PC-3 (cell line): ENCODE measurements at regions of chr4 and their contacts with region 1.

Region 1: DNA sequence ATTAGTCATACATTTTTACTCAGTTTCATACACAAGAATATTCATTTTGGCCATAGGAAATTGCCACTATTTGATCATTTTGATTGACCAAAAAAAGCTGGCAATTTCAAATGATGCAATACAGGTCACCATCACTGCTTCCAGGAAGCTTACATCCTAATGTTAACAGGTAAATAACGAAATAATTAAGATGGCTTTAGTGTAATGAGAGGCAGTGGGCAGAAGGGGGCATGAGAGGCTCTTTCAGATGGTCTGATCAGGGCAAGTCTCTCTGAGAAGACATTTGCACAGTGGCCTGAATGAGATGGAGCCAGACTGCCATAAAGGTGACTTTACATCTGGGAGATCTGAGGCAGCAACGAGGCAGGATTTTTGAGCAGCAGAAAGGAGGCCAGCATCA is 170.7 kb downstream of the SLIT2 start:
- DNase-seq: peak; percentile 51
- ATAC-seq: peak; percentile 61
- H3K4me3 ChIP-seq: no peak overlapping the region
- H3K27ac ChIP-seq: no peak overlapping the region
- H3K4me1 ChIP-seq: peaks cover 8% of the 10 kb centered on the region; the same call in 1 of the 2 replicates
- H3K27me3 ChIP-seq: no peaks in the 10 kb centered on the region
- CTCF ChIP-seq: peak; percentile 50

Region 2: GRCh38 chr4:20299515-20299914 is 122.9 kb before region 1 on chr4:
- CTCF ChIA-PET with region 1: no interaction called
- POLR2A ChIA-PET with region 1: no interaction called
- intact Hi-C with region 1: loop called (anchors 10 kb)
- DNase-seq: peak; percentile 45
- ATAC-seq: no peak
- H3K4me3 ChIP-seq: no peak overlapping the region
- H3K27ac ChIP-seq: no peak overlapping the region
- H3K4me1 ChIP-seq: peaks cover under 1% of the 10 kb centered on the region; the same call in 1 of the 2 replicates
- H3K27me3 ChIP-seq: no peaks in the 10 kb centered on the region
- CTCF ChIP-seq: peak; percentile 56

Region 3: DNA sequence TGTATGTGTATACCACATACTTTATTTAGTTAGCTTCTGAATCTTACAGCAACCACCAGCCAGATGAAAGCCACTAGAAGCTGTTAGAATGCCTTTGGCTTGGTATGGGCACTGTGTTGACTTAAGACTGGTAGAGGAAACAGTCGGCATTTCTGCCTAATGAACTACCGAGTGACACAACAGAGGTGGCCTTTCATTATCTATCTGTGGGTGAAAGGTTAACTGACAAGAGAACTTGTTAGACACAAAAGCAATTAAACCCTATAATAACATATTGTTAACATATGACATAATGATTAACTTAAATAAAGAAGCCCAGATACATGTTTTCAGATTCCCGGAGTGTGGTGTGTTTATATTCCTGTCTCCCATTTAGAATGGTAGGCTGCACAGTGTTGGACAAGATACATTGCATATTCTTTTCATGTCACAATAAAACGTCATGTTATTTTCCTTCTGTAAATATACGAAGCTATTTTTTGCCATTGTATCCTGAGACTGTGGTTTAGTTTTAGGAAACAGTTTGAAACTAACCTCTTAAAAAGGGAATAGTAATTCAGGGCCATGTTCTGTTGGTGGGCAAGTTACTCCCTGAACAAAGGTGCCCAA is 10.8 kb after region 1 on chr4:
- CTCF ChIA-PET with region 1: interaction called, 10 read pairs
- POLR2A ChIA-PET with region 1: no interaction called
- intact Hi-C with region 1: no loop called
- DNase-seq: no peak
- ATAC-seq: no peak
- H3K4me3 ChIP-seq: no peak overlapping the region
- H3K27ac ChIP-seq: no peak overlapping the region
- H3K4me1 ChIP-seq: 0 out of 2 replicates have a peak, but pooled peaks cover 12% of the 10 kb centered on the region
- H3K27me3 ChIP-seq: no peaks in the 10 kb centered on the region
- CTCF ChIP-seq: no peak

Region 4: GRCh38 chr4:20506827-20507226 is 84.4 kb after region 1 on chr4:
- CTCF ChIA-PET with region 1: no interaction called
- POLR2A ChIA-PET with region 1: no interaction called
- intact Hi-C with region 1: loop called (anchors 10 kb)
- DNase-seq: peak; percentile 76
- ATAC-seq: peak; percentile 94
- H3K4me3 ChIP-seq: no peak overlapping the region
- H3K27ac ChIP-seq: peak overlapping the region; percentile 48
- H3K4me1 ChIP-seq: peaks cover 18% of the 10 kb centered on the region
- H3K27me3 ChIP-seq: no peaks in the 10 kb centered on the region
- CTCF ChIP-seq: no peak

Region 5: DNA sequence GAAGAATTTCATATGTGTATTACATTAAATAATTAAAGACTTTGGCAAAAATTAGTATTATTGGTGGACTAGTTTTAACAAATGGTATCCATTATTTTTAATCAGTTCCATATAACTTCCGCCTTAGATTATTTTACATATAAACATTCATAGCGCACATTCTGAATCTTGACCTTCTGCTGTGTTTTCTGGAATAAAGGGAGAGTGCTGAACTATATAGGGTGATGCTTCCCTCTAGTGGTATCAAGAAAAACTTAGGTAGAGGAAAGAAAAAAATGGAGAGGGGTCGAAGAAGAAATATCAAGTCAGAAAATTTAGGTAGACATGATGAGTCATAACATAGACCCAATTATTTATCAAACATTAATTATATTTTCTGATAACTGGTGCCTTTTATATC is 122.2 kb after region 1 on chr4:
- CTCF ChIA-PET with region 1: no interaction called
- POLR2A ChIA-PET with region 1: no interaction called
- intact Hi-C with region 1: loop called (anchors 1 kb)
- DNase-seq: peak; percentile 38
- ATAC-seq: peak; percentile 29; the same call in 1 of the 2 replicates
- H3K4me3 ChIP-seq: no peak overlapping the region
- H3K27ac ChIP-seq: no peak overlapping the region
- H3K4me1 ChIP-seq: no peaks in the 10 kb centered on the region
- H3K27me3 ChIP-seq: no peaks in the 10 kb centered on the region
- CTCF ChIP-seq: peak; percentile 64

Region 6: GRCh38 chr4:20684852-20685763 is 262.7 kb after region 1 on chr4:
- CTCF ChIA-PET with region 1: no interaction called
- POLR2A ChIA-PET with region 1: no interaction called
- intact Hi-C with region 1: loop called (anchors 2 kb)
- DNase-seq: peak; percentile 58
- ATAC-seq: no peak
- H3K4me3 ChIP-seq: no peak overlapping the region
- H3K27ac ChIP-seq: no peak overlapping the region
- H3K4me1 ChIP-seq: no peaks in the 10 kb centered on the region; the same call in 1 of the 2 replicates
- H3K27me3 ChIP-seq: no peaks in the 10 kb centered on the region
- CTCF ChIP-seq: peak; percentile 66; the same call in 1 of the 2 replicates